ENCODE measurements at regions of chr6 and their contacts with region 1.

Region 1: GRCh38 chr6:16999491-17000436 is 102.1 kb upstream of the STMND1 start:
- DNase-seq: peak; percentile 71
- H3K4me3 ChIP-seq: no peak overlapping the region
- CTCF ChIP-seq: no peak

Region 2: DNA sequence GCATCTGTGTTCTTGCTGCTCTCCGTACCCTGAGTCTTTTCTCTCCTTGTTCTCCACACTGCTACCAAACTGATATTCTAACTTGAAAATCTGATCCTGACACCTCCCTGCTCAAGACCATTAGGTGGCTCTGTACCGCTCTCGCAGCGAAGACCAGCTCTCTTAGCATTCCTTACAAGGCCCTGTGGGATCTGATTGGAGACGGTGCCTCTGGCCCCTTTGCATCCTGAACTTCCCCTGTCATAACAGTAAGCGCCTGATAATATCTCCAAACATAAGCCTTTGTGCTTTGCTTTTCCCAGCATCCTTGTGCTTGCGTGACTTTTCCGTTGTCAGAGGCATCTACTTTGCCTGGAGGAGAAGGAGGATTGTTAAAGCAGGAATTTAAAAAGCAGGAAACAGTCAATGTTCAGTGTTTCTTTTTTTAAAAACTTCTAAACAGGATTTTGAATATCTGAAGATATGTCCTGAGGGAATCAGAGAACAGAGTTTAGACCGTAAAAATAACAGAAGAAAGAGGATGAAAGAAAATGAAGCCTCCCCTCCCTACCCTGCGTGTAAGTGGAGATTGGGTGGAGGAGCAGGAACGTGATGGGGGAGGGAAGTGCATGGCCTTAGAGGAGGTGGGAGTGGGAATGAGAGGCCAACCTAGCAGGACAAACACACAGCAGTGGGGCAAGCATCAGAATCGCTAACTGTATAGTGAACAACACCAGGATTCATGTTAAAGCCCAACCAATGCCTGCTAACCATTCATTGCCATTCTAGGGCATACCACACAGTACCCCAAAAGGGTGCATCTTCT is 12.9 kb after region 1 on chr6:
- CTCF ChIA-PET with region 1: interaction called, 25 read pairs
- POLR2A ChIA-PET with region 1: no interaction called
- DNase-seq: peak; percentile 52
- H3K4me3 ChIP-seq: peak overlapping the region; percentile 41
- CTCF ChIP-seq: peak; percentile 36

Region 3: GRCh38 chr6:17066610-17067009 is 66.8 kb after region 1 on chr6:
- CTCF ChIA-PET with region 1: no interaction called
- POLR2A ChIA-PET with region 1: no interaction called
- DNase-seq: no peak
- H3K4me3 ChIP-seq: no peak overlapping the region
- CTCF ChIP-seq: no peak

Region 4: DNA sequence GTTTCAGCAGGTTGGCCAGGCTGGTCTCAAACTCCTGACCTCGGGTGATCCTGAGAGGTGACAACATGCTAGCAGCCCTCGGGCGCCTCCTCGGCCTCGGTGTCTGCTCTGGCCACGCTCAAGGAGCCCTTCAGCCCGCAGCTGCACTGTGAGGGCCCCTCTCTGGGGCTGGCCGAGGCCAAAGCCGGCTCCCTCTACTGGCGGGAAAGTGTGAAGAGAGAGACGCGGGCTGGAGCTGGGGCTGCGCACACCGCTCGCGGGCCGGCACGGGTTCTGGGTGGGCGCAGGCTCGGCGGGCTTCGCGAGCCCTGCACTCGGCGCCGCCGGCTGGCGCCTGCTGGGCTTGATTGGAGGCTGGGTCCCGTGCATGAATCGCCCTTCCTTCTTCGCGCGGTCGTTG is 200.6 kb after region 1 on chr6:
- CTCF ChIA-PET with region 1: no interaction called
- POLR2A ChIA-PET with region 1: no interaction called
- DNase-seq: no peak
- H3K4me3 ChIP-seq: no peak overlapping the region
- CTCF ChIP-seq: no peak

Measured in AG04449 (cell line).